ENCODE measurements at regions of chr5 and their contacts with region 1.

Region 1: DNA sequence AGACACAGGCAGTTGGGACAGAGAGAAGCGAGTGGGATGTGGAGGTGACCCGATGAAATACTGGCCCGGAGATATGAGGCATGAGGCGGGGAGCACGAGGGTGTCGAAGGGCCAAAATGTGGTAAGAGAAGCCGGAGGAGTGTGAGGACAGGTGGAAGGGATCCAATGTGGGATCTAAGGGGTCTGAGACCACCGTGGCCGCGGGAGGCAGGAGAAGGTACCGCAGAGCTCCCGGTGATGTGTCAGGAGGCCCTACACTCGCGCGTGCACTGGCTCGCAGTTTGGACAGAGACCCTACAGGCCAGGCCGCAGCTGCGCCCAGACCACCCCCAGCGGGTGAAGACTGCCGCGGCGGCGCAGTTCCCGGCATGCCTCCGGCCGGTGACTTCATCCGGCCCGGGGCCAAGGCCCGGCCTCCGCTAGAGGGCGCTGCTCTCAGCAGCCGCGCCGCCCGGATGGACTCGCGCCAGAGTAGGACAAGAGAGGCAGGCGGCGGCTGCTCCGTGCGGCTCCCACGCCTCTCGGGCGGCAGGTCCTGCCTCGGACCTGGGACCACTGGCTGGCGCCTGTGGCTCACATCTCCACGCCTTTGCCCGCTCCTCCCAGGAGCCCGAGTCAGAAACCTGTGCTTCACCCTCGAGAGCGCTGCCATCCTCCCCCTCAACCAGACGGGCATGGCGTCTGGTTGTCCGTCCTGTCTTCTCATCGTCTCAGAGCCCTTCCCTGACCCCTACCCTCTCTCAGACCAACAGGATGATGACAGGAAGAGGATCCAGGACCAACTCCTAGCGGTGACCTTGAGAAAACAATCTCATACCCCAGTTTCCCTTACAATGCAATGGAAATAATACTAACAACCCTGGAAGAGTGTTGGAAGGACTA is 35.4 kb upstream of the STING1 start:
- DNase-seq: peak; percentile 90
- H3K4me3 ChIP-seq: peak overlapping the region in 2 of 3 experiments; percentile 7 to 32
- H3K27ac ChIP-seq: peak overlapping the region; percentile 26
- H3K4me1 ChIP-seq: peaks cover 7% of the 10 kb centered on the region
- H3K27me3 ChIP-seq: no peaks in the 10 kb centered on the region
- CTCF ChIP-seq: peak; percentile 98 to 99
- POLR2A ChIP-seq: peak; percentile 92

Region 2: GRCh38 chr5:139422307-139422893 is 95.5 kb before region 1 on chr5:
- CTCF ChIA-PET with region 1: interaction called, 191 read pairs
- POLR2A ChIA-PET with region 1: interaction called, 5 read pairs
- dilution Hi-C with region 1: loop called (anchors 10 kb)
- intact Hi-C with region 1: loop called (anchors 1 kb)
- DNase-seq: peak; percentile 79
- H3K4me3 ChIP-seq: no peak overlapping the region
- H3K27ac ChIP-seq: no peak overlapping the region
- H3K4me1 ChIP-seq: peaks cover 25% of the 10 kb centered on the region
- H3K27me3 ChIP-seq: no peaks in the 10 kb centered on the region
- CTCF ChIP-seq: peak; percentile 63 to 81
- POLR2A ChIP-seq: no peak

Region 3: DNA sequence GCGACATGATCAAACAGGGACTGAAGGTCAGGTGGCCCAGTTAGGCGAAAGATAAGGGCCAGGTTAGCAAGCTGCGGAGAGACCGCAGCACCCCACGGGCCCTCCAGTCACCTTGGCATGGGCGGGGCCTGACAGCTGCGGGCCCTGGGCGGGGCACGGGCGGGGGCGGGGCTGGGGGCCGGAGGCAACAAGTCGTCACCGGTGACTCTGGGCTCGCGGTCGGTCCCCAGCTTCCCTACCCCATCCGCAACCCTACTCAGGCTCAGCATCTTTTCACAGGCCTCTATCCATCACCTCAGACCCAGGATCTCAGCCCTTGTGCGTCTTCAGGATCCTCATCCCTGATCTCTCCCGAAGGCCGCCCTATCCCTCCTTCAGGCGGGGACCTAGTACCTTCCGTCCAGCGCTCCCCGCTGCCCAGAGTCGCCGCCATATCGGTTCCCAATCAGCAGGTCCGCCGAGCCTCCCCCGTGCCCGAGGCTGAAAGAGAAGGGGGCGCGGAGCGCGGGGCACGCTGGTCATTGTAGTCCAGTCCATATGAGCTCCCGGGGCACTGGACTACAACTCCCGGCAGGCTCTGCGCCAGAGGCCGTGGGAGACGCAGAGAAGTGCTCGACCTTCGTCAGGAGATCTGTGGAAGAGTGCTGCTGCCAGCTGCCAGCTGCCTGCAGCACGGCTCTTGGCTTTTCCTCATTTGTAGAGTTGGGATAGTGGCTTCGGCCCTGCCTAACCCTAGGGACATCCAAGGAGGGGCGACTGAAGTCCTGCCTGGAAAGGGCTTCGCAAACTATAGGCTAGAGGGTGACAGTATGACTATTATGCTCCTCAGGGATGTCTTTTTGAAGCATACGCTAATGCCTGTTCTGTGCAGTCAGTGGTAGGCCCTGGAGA is 78.7 kb before region 1 on chr5 and contains the start of gene DNAJC18:
- CTCF ChIA-PET with region 1: interaction called, 44 read pairs
- POLR2A ChIA-PET with region 1: interaction called, 5 read pairs
- dilution Hi-C with region 1: no loop called
- intact Hi-C with region 1: loop called (anchors 1 kb)
- DNase-seq: peak; percentile 88
- H3K4me3 ChIP-seq: peak within 1 kb of the TSS; percentile 42 to 66 (median 54)
- H3K27ac ChIP-seq: peak within 1 kb of the TSS; percentile 83
- H3K4me1 ChIP-seq: peaks cover 29% of the 10 kb centered on the region
- H3K27me3 ChIP-seq: no peaks in the 10 kb centered on the region
- CTCF ChIP-seq: no peak
- POLR2A ChIP-seq: peak; percentile 49
- total RNA-seq, gene DNAJC18: 51.1 and 52.6 TPM in 2 replicates

Region 4: GRCh38 chr5:139474890-139475791 is 42.8 kb before region 1 on chr5:
- CTCF ChIA-PET with region 1: interaction called, 16 read pairs
- POLR2A ChIA-PET with region 1: no interaction called
- dilution Hi-C with region 1: no loop called
- intact Hi-C with region 1: no loop called
- DNase-seq: no peak
- H3K4me3 ChIP-seq: no peak overlapping the region
- H3K27ac ChIP-seq: no peak overlapping the region
- H3K4me1 ChIP-seq: peaks cover 18% of the 10 kb centered on the region
- H3K27me3 ChIP-seq: no peaks in the 10 kb centered on the region
- CTCF ChIP-seq: no peak
- POLR2A ChIP-seq: no peak

Region 5: DNA sequence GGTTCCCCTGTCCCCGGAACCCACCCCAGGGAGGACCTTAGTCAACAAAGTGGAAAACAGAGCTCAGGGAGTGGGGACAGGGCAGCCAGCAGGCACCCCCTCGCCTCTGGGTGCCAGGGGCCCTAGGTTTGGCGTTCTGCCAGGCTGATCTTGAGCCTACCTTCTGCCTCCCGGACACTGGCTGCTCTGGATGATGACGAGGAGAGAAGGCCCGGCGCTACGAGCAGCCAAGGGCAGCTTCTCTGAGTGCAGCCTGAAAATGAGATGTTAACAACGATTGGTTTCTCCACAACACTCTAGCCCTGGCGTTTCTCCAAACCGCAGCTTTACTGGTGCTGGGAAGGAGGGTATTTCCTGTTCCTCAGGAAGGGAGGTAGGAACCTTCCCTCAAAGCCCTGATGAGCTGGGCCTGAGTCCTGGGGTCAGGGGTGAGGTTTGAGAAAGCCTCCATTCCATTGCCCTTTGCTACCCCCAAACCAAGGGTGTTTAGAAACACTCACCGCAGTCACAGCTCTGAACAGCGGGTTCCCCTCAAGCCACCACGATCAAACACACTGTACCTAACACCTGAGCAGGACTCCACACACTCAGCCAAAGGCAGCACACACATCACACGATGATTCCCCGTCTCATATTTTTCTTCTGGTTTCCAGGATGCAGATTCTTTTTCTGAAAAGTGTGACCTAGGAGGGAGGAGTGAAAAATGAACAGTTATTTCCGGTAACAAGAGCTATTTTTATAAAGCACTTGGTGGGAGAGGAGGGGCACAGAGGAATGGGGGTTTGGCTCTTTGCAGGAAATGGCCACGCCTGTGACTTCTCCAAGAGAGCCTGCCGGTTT is 35.7 kb before region 1 on chr5 and contains the start of gene STING1:
- CTCF ChIA-PET with region 1: interaction called, 59 read pairs
- POLR2A ChIA-PET with region 1: no interaction called
- dilution Hi-C with region 1: no loop called
- intact Hi-C with region 1: loop called (anchors 1 kb)
- DNase-seq: peak; percentile 90
- H3K4me3 ChIP-seq: peak within 1 kb of the TSS; percentile 4 to 67 (median 42)
- H3K27ac ChIP-seq: peak within 1 kb of the TSS; percentile 94
- H3K4me1 ChIP-seq: peaks cover 27% of the 10 kb centered on the region
- H3K27me3 ChIP-seq: no peaks in the 10 kb centered on the region
- CTCF ChIP-seq: no peak
- POLR2A ChIP-seq: peak; percentile 58
- total RNA-seq, gene STING1: 108 and 127 TPM in 2 replicates

Region 6: DNA sequence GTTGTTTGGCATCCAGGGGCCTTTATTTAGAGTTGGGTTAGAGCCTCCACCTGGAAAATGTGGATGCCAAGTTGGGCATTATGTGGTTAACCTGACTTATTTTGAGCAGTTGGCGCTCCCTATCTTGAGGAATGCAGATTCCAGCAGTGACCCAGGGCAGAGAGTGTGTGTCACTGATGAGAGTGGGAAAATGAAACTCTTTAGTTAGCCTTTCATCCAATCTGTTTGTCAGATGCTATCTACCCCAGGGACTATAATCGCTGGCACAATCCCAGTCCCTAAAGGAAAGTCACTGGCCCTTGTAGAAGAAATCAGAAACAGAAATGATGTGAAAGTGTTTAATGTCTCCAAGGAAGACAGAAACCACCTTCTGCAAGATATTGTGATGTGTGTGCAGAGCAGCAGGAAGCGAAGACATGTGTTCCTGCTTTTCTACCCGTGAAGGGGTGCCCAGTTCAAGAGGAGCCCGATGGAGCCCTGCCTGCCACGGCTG is 25.2 kb before region 1 on chr5:
- CTCF ChIA-PET with region 1: interaction called, 30 read pairs
- POLR2A ChIA-PET with region 1: no interaction called
- dilution Hi-C with region 1: no loop called
- intact Hi-C with region 1: loop called (anchors 1 kb)
- DNase-seq: peak; percentile 31
- H3K4me3 ChIP-seq: no peak overlapping the region
- H3K27ac ChIP-seq: no peak overlapping the region
- H3K4me1 ChIP-seq: peaks cover 33% of the 10 kb centered on the region
- H3K27me3 ChIP-seq: no peaks in the 10 kb centered on the region
- CTCF ChIP-seq: no peak
- POLR2A ChIP-seq: no peak

Region 7: GRCh38 chr5:139560752-139561654 is 43.1 kb after region 1 on chr5 and contains the start of gene UBE2D2:
- CTCF ChIA-PET with region 1: interaction called, 4 read pairs
- POLR2A ChIA-PET with region 1: interaction called, 3 read pairs
- dilution Hi-C with region 1: no loop called
- intact Hi-C with region 1: loop called (anchors 1 kb)
- DNase-seq: peak; percentile 97
- H3K4me3 ChIP-seq: peak within 1 kb of the TSS; percentile 71 to 92 (median 85)
- H3K27ac ChIP-seq: peak within 1 kb of the TSS; percentile 82
- H3K4me1 ChIP-seq: peaks cover 31% of the 10 kb centered on the region
- H3K27me3 ChIP-seq: no peaks in the 10 kb centered on the region
- CTCF ChIP-seq: no peak
- POLR2A ChIP-seq: peak; percentile 89
- total RNA-seq, gene UBE2D2: 156 and 172 TPM in 2 replicates

Measured in endothelial cell of umbilical vein (primary cell).